OCI-LY7 (cell line): ENCODE measurements at regions of chr2 and their contacts with region 1.

Region 1: DNA sequence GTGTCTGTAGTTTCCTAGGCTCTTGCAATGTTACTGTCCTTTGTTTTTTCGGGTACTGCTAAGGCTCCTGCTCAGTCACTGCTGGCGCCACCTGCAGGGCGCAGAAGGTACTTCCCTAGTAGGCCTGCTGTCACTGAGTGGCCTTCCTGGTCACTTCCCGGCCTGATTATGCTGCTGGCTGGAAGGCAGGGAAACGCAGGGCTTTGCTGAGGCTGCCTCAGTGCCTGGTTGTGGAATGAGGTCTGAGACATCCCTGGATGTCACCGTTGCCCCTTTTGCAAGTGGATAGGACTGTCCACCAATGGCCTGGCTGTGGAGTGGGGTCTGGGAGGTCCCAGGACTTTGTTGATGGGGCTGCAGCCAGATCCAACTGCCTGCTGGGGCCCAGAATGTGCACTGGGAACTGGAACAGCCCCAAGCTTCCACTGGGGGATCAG is 13.1 kb downstream of the DAW1 start:
- DNase-seq: peak; percentile 48
- H3K4me3 ChIP-seq: no peak overlapping the region
- H3K27ac ChIP-seq: no peak overlapping the region
- H3K4me1 ChIP-seq: no peaks in the 10 kb centered on the region
- CTCF ChIP-seq: peak; percentile 88

Region 2: GRCh38 chr2:227655454-227655853 is 229.1 kb before region 1 on chr2:
- CTCF ChIA-PET with region 1: interaction called, 3 read pairs
- POLR2A ChIA-PET with region 1: no interaction called
- intact Hi-C with region 1: loop called (anchors 10 kb)
- DNase-seq: no peak
- H3K4me3 ChIP-seq: no peak overlapping the region
- H3K27ac ChIP-seq: no peak overlapping the region
- H3K4me1 ChIP-seq: no peaks in the 10 kb centered on the region
- CTCF ChIP-seq: no peak